ENCODE measurements at regions of chr12 and their contacts with region 1.

Region 1: DNA sequence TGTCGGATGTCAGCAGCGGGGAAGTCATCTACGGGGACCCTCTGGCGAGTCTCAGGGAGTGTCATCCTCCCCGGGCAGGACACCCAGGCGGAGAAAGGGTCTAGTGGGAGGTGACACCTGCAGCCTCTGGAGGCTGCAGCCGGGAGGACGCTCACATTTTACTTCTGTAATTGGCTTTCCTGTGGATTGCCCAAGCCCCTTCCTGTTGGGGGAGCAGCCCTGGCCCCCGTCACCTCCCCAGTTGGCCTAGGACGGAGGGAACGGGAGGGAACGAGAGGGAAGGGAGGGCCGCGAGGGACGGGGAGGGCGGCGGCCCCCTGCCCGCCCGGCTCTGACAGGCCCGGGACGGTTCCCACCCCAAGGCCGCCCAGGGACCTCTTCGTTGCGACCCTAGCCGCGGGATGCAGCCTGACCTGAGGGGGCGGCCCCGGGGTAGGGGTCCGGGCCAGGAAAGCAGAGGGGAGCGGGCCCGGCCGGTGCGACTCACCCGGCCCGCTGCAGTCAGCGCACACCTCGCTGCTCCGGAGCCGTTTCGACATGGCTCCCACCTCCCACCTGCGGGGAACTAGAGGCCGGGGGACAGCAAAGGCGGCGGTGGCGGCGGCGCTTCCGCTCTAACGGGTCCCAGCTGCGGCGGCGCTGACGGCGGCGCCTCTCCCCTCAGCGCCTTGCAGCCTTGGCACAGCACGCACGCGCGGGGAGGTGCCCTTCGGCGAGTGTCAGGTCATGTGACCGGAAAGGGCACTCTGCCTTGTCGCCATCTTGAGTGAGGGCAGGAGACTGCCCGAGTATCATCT is at the start of gene GIT2:
- DNase-seq: peak; percentile 88 to 98 (median 94)
- ATAC-seq: peak; percentile 80
- H3K4me3 ChIP-seq: peak within 1 kb of the TSS; percentile 95
- H3K4me3 Mint-ChIP-seq: peak within 1 kb of the TSS; percentile 97
- H3K27ac ChIP-seq: peak within 1 kb of the TSS; percentile 85 to 92
- H3K27ac Mint-ChIP-seq: peak within 1 kb of the TSS; percentile 94
- H3K4me1 ChIP-seq: peaks cover 50% of the 10 kb centered on the region
- H3K4me1 Mint-ChIP-seq: peaks cover 71% of the 10 kb centered on the region
- H3K27me3 ChIP-seq: no peaks in the 10 kb centered on the region
- H3K27me3 Mint-ChIP-seq: no peaks in the 10 kb centered on the region
- CTCF ChIP-seq: no peak
- total RNA-seq, gene GIT2: 68.6 to 70.7 TPM

Region 2: DNA sequence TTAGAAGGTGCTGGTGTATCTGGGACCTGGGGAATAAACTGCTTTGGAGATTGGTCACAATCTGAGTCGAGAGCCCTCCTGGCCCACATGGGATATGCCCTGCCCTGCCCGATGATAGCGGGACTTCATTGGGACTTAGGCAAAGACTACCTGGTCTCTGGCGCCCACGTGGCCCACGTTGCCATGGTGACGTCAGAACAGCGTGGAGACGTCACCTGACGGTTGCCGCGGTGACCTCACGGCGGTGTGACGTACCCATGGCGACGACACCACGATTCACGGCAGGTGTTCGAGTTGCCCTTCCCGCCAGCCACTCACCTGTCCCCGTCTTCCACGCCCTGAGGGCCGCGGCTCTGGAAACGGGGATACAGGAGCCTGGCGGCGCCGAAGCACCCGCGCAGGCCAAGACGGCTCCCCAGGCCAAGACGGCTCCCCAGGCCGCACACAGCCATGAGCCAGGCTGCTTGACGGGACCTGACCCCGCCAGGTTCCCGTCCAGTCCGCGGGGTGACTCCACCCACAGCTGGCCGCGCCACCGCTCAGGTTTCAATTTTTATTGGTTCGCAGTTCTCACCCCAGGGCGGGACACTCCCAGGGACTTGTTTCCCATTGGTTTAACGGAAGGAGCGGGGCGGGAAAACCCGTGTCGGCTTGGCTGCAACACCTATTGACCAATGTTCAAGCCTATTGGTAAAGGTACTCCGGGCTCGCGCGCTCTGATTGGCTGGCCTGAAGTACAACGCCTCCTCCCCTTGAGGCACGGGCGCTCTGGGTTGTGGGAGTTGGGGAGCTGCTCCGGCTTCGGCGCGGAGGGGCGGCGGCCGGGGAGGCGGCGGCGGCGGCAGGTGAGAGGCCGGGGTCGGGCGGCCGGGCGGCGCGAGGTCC is 422.6 kb before region 1 on chr12 and contains the starts of genes MMAB and MVK:
- CTCF ChIA-PET with region 1: no interaction called
- POLR2A ChIA-PET with region 1: no interaction called
- intact Hi-C with region 1: loop called in 1 of 2 experiments (anchors 10 kb)
- DNase-seq: peak; percentile 95 to 100 (median 98)
- ATAC-seq: peak; percentile 91
- H3K4me3 ChIP-seq: peak within 1 kb of the TSS; percentile 78
- H3K4me3 Mint-ChIP-seq: peak within 1 kb of the TSS; percentile 99
- H3K27ac ChIP-seq: peak within 1 kb of the TSS; percentile 83 to 96
- H3K27ac Mint-ChIP-seq: peak within 1 kb of the TSS; percentile 95
- H3K4me1 ChIP-seq: peaks cover 19% of the 10 kb centered on the region
- H3K4me1 Mint-ChIP-seq: peaks cover 29% of the 10 kb centered on the region
- H3K27me3 ChIP-seq: no peaks in the 10 kb centered on the region
- H3K27me3 Mint-ChIP-seq: no peaks in the 10 kb centered on the region
- CTCF ChIP-seq: no peak
- total RNA-seq, gene MMAB: 8.6 to 9.2 TPM
- total RNA-seq, gene MVK: 8.2 to 8.4 TPM

Region 3: GRCh38 chr12:109625131-109625559 is 370.7 kb before region 1 on chr12:
- CTCF ChIA-PET with region 1: no interaction called
- POLR2A ChIA-PET with region 1: no interaction called
- intact Hi-C with region 1: no loop called
- DNase-seq: no peak
- ATAC-seq: no peak
- H3K4me3 ChIP-seq: no peak overlapping the region
- H3K4me3 Mint-ChIP-seq: no peak overlapping the region
- H3K27ac ChIP-seq: no peak overlapping the region
- H3K27ac Mint-ChIP-seq: no peak overlapping the region
- H3K4me1 ChIP-seq: no peaks in the 10 kb centered on the region
- H3K4me1 Mint-ChIP-seq: peaks cover 5% of the 10 kb centered on the region
- H3K27me3 ChIP-seq: peaks cover 4 to 18% of the 10 kb centered on the region in 2 experiments
- H3K27me3 Mint-ChIP-seq: peaks cover 56% of the 10 kb centered on the region
- CTCF ChIP-seq: no peak

Region 4: GRCh38 chr12:109844983-109845823 is 150.7 kb before region 1 on chr12:
- CTCF ChIA-PET with region 1: no interaction called
- POLR2A ChIA-PET with region 1: no interaction called
- intact Hi-C with region 1: no loop called
- DNase-seq: peak; percentile 70 to 93 (median 84)
- ATAC-seq: peak; percentile 98
- H3K4me3 ChIP-seq: peak overlapping the region; percentile 28
- H3K4me3 Mint-ChIP-seq: peak overlapping the region; percentile 48
- H3K27ac ChIP-seq: no peak overlapping the region
- H3K27ac Mint-ChIP-seq: no peak overlapping the region
- H3K4me1 ChIP-seq: peaks cover 8% of the 10 kb centered on the region
- H3K4me1 Mint-ChIP-seq: no peaks in the 10 kb centered on the region
- H3K27me3 ChIP-seq: no peaks in the 10 kb centered on the region
- H3K27me3 Mint-ChIP-seq: no peaks in the 10 kb centered on the region
- CTCF ChIP-seq: peak; percentile 93

Region 5: DNA sequence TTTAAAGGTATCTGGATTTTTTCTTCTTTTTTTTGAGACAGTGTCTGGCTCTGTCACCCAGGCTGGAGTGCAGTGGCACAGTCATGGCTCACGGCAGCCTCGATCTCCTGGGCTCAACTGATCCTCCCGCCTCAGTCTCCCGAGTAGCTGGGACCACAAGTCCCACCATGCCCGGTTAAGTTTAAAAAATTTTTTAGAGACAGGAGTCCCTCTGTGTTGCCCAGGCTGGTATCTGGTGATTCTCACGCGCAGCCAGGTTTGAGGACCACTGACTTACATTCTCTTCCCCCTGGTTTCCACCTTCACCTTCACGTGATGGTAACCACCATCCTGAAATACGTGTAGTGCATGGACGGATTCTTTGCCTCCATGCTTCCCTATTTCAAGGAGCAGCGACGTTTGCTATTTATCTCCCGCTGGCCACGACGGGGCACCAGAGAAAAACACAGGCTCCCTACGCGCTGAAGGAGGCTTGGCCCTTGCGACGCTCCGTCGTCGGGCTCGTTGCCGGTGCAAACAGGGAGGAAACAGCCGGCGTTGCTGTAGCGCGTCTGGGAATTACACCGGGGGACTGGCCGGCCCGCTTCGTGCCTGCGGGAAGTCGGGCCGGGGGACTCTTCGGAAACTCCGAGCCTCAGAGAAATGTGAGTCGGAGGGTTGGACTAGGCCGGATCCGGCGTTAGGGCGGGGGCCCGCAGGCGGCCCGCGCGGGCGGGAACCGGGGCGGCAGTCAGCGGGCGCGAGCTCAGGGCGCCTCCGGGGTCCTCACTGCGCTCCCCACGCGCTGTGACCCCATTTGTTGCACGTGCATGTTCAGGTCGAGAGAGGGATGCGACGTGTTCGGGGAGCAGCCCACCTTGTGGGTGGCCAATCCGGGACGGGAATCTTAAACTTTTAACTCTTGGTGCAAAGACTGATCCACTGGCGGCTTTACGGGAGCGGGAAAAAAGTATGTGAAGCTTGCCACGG is 95.8 kb before region 1 on chr12 and contains the start of gene TCHP:
- CTCF ChIA-PET with region 1: no interaction called
- POLR2A ChIA-PET with region 1: interaction called, 5 read pairs
- intact Hi-C with region 1: loop called in 1 of 2 experiments (anchors 5 kb)
- DNase-seq: peak; percentile 59 to 90 (median 69)
- ATAC-seq: peak; percentile 93
- H3K4me3 ChIP-seq: peak within 1 kb of the TSS; percentile 72
- H3K4me3 Mint-ChIP-seq: peak within 1 kb of the TSS; percentile 89
- H3K27ac ChIP-seq: peak within 1 kb of the TSS; percentile 55 to 64
- H3K27ac Mint-ChIP-seq: peak within 1 kb of the TSS; percentile 86
- H3K4me1 ChIP-seq: peaks cover 28% of the 10 kb centered on the region
- H3K4me1 Mint-ChIP-seq: peaks cover 25% of the 10 kb centered on the region
- H3K27me3 ChIP-seq: no peaks in the 10 kb centered on the region
- H3K27me3 Mint-ChIP-seq: no peaks in the 10 kb centered on the region
- CTCF ChIP-seq: no peak
- total RNA-seq, gene TCHP: 13.2 to 13.6 TPM

Region 6: DNA sequence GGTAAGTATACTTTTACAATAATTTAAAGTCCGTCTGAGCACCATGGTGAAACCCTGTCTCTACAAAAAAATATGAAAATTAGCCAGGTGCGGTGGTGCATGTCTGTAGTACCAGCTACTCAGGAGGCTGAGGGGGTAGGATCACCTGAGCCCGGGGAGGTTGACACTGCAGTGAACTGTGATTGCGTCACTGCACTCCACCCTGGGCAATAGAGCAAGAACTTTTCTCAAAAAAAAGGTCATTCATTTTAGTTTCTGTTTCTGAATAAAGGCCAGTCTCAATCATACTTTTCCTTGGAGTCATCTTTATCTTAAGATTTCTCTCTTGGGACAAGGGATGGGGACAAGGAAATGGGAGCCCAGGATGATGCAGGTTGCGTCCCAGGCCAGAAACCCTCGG is 16.3 kb after region 1 on chr12:
- CTCF ChIA-PET with region 1: no interaction called
- POLR2A ChIA-PET with region 1: interaction called, 10 read pairs
- intact Hi-C with region 1: loop called in 1 of 2 experiments (anchors 1 kb)
- DNase-seq: peak in 4 of 14 experiments; percentile 8 to 64 (median 54)
- ATAC-seq: peak; percentile 70
- H3K4me3 ChIP-seq: no peak overlapping the region
- H3K4me3 Mint-ChIP-seq: peak overlapping the region; percentile 45
- H3K27ac ChIP-seq: peak overlapping the region in 1 of 2 donors; percentile 57
- H3K27ac Mint-ChIP-seq: peak overlapping the region; percentile 89
- H3K4me1 ChIP-seq: peaks cover 37% of the 10 kb centered on the region
- H3K4me1 Mint-ChIP-seq: peaks cover 63% of the 10 kb centered on the region
- H3K27me3 ChIP-seq: no peaks in the 10 kb centered on the region
- H3K27me3 Mint-ChIP-seq: no peaks in the 10 kb centered on the region
- CTCF ChIP-seq: no peak

Region 7: DNA sequence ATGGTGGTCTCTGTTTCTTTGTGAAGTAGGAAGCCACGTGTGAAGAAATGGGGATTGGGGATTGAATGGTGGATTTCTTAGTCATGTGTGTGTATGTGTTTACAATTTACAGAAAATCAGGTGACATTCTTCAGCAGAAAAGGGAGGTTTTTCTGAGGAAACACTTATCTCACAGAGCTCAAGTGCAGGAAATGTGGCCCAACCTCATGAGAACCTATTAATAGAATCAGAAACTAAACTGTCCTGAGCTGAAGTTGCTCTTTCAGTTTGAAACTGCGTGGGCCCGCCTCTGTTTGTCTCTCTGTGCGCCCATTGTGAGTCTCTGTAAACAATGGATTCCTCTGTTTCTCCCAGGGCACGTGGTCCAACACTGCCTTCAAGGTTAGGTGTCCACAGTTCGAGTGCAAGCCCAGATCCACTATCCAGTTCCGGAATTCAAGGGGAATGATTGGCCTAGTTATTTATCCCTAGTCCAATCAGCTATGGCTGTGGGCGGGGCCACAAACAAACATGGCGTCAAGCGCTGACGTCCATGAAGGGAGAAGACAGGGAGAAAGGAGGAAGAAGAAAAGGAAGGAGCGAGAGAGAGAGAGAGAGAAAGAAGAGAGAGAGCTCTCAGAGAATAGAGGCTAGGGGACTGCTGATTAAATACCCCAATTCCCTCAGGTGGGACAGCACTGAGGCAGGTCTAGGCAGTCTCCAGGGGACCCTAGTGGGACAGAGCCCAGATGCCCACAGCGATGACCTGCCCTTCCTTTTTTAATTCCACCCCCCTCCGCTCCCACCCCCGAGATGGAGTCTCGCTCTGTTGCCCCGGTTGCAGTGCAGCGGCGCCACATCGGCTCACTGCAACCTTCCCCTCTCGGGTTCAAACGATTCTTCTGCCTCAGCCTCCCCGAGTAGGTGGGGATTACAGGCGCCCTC is 83.9 kb after region 1 on chr12:
- CTCF ChIA-PET with region 1: no interaction called
- POLR2A ChIA-PET with region 1: interaction called, 13 read pairs
- intact Hi-C with region 1: no loop called
- DNase-seq: peak; percentile 50 to 89 (median 67)
- ATAC-seq: peak; percentile 94
- H3K4me3 ChIP-seq: peak overlapping the region; percentile 41
- H3K4me3 Mint-ChIP-seq: peak overlapping the region; percentile 84
- H3K27ac ChIP-seq: peak overlapping the region; percentile 75 to 84
- H3K27ac Mint-ChIP-seq: peak overlapping the region; percentile 95
- H3K4me1 ChIP-seq: peaks cover 24% of the 10 kb centered on the region
- H3K4me1 Mint-ChIP-seq: peaks cover 18% of the 10 kb centered on the region
- H3K27me3 ChIP-seq: no peaks in the 10 kb centered on the region
- H3K27me3 Mint-ChIP-seq: no peaks in the 10 kb centered on the region
- CTCF ChIP-seq: no peak

Region 8: GRCh38 chr12:110403146-110403975 is 407.5 kb after region 1 on chr12 and contains the start of gene ANAPC7:
- CTCF ChIA-PET with region 1: no interaction called
- POLR2A ChIA-PET with region 1: no interaction called
- intact Hi-C with region 1: loop called in 1 of 2 experiments (anchors 10 kb)
- DNase-seq: peak; percentile 73 to 94 (median 84)
- ATAC-seq: peak; percentile 94
- H3K4me3 ChIP-seq: peak within 1 kb of the TSS; percentile 79
- H3K4me3 Mint-ChIP-seq: peak within 1 kb of the TSS; percentile 99
- H3K27ac ChIP-seq: peak within 1 kb of the TSS; percentile 86 to 91
- H3K27ac Mint-ChIP-seq: peak within 1 kb of the TSS; percentile 98
- H3K4me1 ChIP-seq: peaks cover 26% of the 10 kb centered on the region
- H3K4me1 Mint-ChIP-seq: peaks cover 41% of the 10 kb centered on the region
- H3K27me3 ChIP-seq: no peaks in the 10 kb centered on the region
- H3K27me3 Mint-ChIP-seq: no peaks in the 10 kb centered on the region
- CTCF ChIP-seq: no peak
- total RNA-seq, gene ANAPC7: 16.4 to 18.2 TPM